ENCODE measurements at regions of chr15 and their contacts with region 1.

Region 1: DNA sequence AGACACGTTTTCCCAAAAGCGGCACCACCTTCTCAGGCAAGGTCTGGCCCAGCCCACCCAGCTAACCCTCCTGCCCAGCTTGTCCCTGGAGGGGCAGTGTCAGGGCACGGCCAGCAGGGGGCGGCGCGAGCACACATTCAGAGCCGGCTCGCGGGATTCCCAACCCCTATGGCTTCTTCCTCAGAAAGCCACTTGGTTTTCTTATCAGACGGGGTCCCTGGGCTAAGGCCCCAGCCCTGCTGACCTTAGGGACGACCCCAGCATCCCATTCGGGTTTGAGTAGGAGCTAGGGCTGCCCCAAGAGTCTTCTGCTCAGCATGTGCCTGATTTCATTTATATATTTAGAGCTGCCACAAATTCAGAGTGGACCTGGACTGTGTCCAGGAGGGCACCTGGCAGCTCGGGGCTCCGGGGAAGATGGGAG is 14.5 kb downstream of the RLBP1 start:
- DNase-seq: no peak
- H3K4me3 ChIP-seq: no peak overlapping the region
- H3K27me3 ChIP-seq: 0 out of 2 replicates have a peak, but pooled peaks cover 1% of the 10 kb centered on the region
- CTCF ChIP-seq: peak; percentile 100

Region 2: DNA sequence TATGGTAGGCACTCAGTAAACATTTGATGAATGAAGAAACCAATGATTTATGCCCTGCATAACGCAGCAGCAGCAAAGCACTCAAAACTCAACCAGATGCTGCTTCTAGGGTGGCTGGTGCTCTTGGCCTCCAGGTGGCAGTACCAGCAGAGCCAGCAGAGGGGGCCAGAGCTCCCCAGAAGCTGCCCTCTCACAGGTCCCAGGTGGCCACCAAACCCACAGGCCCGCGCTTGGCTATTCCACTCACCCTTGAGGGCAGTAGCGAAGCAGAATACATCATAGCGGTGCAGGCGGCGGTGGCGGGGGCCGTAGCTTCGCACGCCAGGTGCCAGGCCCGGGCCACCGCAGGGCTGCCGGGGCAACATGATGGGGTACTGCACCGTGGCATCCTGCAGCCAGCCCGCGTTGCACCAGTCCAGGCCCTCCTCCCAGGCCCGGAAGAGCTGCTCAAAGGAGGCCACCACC is 328.2 kb before region 1 on chr15:
- CTCF ChIA-PET with region 1: no interaction called
- POLR2A ChIA-PET with region 1: no interaction called
- DNase-seq: no peak
- H3K4me3 ChIP-seq: no peak overlapping the region
- H3K27me3 ChIP-seq: no peaks in the 10 kb centered on the region
- CTCF ChIP-seq: peak; percentile 91

Region 3: DNA sequence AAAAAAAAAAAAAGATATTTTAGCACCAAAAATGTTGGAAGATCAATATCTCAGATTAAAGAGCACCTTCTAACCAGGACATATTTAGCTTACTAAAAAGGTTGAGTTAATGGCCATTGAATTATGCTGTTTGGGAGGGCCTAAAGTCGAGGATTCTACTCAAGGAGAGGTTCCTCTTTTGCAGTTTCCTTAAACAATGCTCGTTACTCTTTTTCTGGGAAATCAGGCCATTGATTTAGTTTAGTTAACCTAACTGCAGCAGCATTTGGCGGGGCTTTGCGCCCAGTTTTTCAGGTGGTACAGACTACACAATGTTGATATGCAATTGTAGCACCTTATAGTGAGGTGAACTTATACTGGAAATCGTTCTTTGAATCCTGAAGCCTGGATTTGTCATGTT is 111.8 kb before region 1 on chr15:
- CTCF ChIA-PET with region 1: no interaction called
- POLR2A ChIA-PET with region 1: no interaction called
- DNase-seq: no peak
- H3K4me3 ChIP-seq: no peak overlapping the region
- H3K27me3 ChIP-seq: no peaks in the 10 kb centered on the region
- CTCF ChIP-seq: no peak

Region 4: GRCh38 chr15:89177633-89178306 is 29.1 kb before region 1 on chr15:
- CTCF ChIA-PET with region 1: interaction called, 10 read pairs
- POLR2A ChIA-PET with region 1: no interaction called
- DNase-seq: peak; percentile 21
- H3K4me3 ChIP-seq: no peak overlapping the region
- H3K27me3 ChIP-seq: no peaks in the 10 kb centered on the region
- CTCF ChIP-seq: peak; percentile 86

Region 5: GRCh38 chr15:89221543-89221942 is 14.6 kb after region 1 on chr15 and contains the start of gene RLBP1:
- CTCF ChIA-PET with region 1: interaction called, 22 read pairs
- POLR2A ChIA-PET with region 1: no interaction called
- DNase-seq: no peak
- H3K4me3 ChIP-seq: no peak within 1 kb of the TSS
- H3K27me3 ChIP-seq: peaks cover 15% of the 10 kb centered on the region
- CTCF ChIP-seq: no peak
- polyA plus RNA-seq, gene RLBP1: not detected in 2 replicates

Region 6: DNA sequence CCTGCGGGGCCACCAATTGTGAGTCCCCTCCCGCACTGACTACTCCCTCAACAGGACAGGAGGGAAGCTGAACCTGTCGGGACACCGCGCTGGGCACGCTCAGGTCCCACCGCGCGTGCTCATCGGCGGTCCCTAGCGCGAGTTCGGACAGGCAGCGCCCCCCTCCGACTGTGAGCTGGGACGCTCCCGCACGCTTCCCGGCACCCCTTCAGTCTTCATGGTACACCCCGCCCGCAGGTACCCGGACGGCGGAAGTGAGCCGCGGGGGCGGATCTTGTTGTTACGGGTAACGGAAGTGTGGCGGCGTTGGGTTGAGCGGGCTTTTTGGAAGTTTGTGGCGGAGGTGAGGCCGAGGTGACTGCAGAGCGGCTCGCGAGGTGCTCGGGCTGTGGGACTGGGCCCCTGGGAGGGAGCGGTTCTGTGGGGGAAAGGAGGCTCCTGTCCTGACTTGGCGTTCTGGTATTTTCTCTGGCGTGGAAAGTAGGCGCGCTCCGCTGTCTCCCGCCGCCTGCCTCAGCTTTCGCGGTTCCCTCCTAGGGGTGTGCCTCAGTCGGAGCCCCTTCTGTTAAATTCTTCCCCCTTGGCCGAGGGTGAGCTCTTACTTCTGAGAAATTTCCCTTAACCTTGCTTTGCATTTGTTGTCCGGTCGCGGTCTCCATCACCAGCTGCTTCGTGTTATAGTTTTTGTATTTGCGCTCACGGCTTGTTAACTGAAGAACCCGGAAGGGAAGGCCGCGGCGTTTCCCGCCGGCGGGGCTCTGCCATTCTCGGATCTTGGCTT is 37.0 kb after region 1 on chr15 and contains the start of gene FANCI:
- CTCF ChIA-PET with region 1: interaction called, 11 read pairs
- POLR2A ChIA-PET with region 1: no interaction called
- DNase-seq: peak; percentile 62
- H3K4me3 ChIP-seq: peak within 1 kb of the TSS; percentile 75
- H3K27me3 ChIP-seq: no peaks in the 10 kb centered on the region
- CTCF ChIP-seq: peak; percentile 60
- polyA plus RNA-seq, gene FANCI: 11.5 and 18.3 TPM in 2 replicates

Region 7: GRCh38 chr15:89430530-89431341 is 223.8 kb after region 1 on chr15:
- CTCF ChIA-PET with region 1: interaction called, 12 read pairs
- POLR2A ChIA-PET with region 1: no interaction called
- DNase-seq: peak; percentile 6
- H3K4me3 ChIP-seq: peak overlapping the region; percentile 35
- H3K27me3 ChIP-seq: peaks cover 11% of the 10 kb centered on the region
- CTCF ChIP-seq: peak; percentile 97